ENCODE measurements at regions of chr12 and their contacts with region 1.

Region 1: GRCh38 chr12:80269803-80270552 is 170.6 kb downstream of the OTOGL start:
- DNase-seq: peak in 1 of 5 donors; percentile 12
- ATAC-seq: peak in 2 of 4 donors; percentile 50 to 51
- H3K4me3 ChIP-seq: no peak overlapping the region
- H3K27ac ChIP-seq: no peak overlapping the region
- H3K4me1 ChIP-seq: peaks cover 0 to 8% (median 0%) of the 10 kb centered on the region in 12 donors
- H3K27me3 ChIP-seq: no peaks in the 10 kb centered on the region
- CTCF ChIP-seq: peak; percentile 51 to 83 (median 66)
- POLR2A ChIP-seq: no peak

Region 2: DNA sequence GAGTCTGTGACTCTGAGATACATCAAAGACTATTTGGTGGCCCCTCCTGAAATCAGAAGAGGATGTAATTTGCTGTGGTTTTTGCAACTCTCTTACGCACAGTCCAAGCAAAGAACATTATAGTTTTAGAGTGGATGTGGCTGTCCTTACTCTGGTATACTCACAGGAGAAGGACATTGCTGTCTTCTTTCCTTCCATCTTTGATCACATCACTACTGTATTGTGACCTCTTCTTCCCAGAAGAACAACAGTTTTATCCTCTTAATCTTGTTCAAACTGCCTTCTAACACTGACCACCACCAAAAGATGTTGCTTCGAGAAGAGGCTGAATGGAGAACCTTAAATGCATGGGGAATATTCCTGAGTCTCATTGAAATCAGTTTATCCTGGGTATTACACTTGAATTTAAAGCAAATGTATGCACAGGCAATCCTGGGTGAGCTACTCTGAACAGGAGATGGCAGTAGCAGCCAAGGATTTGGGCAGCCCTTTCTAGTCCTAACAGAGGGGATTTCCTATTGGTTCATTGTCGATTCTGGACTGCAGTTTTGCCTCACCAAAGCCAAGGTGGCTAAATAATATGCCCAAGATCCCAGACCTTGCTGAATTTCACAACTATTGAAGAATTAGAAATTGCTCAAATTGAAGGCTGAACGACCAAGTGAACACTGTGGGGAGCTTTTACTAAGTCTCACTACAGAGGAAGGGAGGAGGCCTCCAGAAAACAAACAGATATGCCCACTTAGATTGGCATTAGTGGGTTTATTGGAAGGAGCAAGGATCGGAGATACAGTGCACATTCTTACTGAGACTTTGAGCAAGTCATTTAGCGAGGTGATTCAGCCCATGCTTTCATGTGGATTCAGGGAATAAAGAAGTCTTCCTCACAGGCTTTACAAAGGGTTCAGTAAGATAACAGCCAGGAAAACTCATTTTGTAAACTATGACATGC is 862.0 kb before region 1 on chr12:
- intact Hi-C with region 1: loop called in 4 of 10 experiments (anchors 5 to 10 kb)
- DNase-seq: peak in 4 of 5 donors; percentile 21 to 33 (median 28)
- ATAC-seq: peak; percentile 48 to 74 (median 67)
- H3K4me3 ChIP-seq: no peak overlapping the region
- H3K27ac ChIP-seq: no peak overlapping the region
- H3K4me1 ChIP-seq: no peaks in the 10 kb centered on the region
- H3K27me3 ChIP-seq: no peaks in the 10 kb centered on the region
- CTCF ChIP-seq: peak; percentile 27 to 71 (median 50)
- POLR2A ChIP-seq: no peak

Region 3: GRCh38 chr12:79547735-79548609 is 722.0 kb before region 1 on chr12:
- intact Hi-C with region 1: loop called in 1 of 10 experiments (anchors 5 kb)
- DNase-seq: peak in 1 of 5 donors; percentile 34
- ATAC-seq: peak in 3 of 4 donors; percentile 59 to 75 (median 73)
- H3K4me3 ChIP-seq: no peak overlapping the region
- H3K27ac ChIP-seq: peak overlapping the region in 4 of 12 donors; percentile 2 to 8 (median 6)
- H3K4me1 ChIP-seq: peaks cover 0 to 22% (median 6%) of the 10 kb centered on the region in 12 donors
- H3K27me3 ChIP-seq: no peaks in the 10 kb centered on the region
- CTCF ChIP-seq: peak; percentile 52 to 81 (median 65)
- POLR2A ChIP-seq: no peak

Region 4: GRCh38 chr12:79737875-79738718 is 531.9 kb before region 1 on chr12:
- intact Hi-C with region 1: loop called in 1 of 10 experiments (anchors 5 kb)
- DNase-seq: no peak
- ATAC-seq: no peak
- H3K4me3 ChIP-seq: no peak overlapping the region
- H3K27ac ChIP-seq: no peak overlapping the region
- H3K4me1 ChIP-seq: peaks cover 0 to 3% (median 0%) of the 10 kb centered on the region in 12 donors
- H3K27me3 ChIP-seq: no peaks in the 10 kb centered on the region
- CTCF ChIP-seq: peak; percentile 46 to 73 (median 64)
- POLR2A ChIP-seq: no peak

Region 5: GRCh38 chr12:80195074-80195726 is 74.8 kb before region 1 on chr12:
- intact Hi-C with region 1: loop called (anchors 1 to 5 kb)
- DNase-seq: peak in 1 of 5 donors; percentile 24
- ATAC-seq: peak in 2 of 4 donors; percentile 52 to 67
- H3K4me3 ChIP-seq: no peak overlapping the region
- H3K27ac ChIP-seq: peak overlapping the region in 1 of 12 donors; percentile 5
- H3K4me1 ChIP-seq: peaks cover 0 to 5% (median 0%) of the 10 kb centered on the region in 12 donors
- H3K27me3 ChIP-seq: no peaks in the 10 kb centered on the region
- CTCF ChIP-seq: peak; percentile 31 to 71 (median 51)
- POLR2A ChIP-seq: no peak

Region 6: DNA sequence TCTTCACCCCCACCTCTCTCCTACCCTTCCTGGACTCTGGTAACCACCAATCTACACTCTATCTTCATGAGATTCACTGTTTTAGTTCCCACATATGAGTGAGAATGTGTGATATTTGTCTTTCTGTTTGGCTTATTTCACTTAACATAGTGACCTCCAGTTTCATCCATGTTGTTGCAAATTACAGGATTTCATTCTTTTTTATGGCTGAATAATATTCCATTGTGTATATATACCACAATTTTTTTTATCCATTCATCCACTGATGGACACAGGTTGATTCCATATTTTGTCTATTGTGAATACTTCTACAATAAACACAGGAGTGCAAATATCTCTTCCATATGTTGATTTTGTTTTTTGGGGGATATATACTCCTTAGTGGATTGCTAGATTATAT is 30.1 kb before region 1 on chr12:
- intact Hi-C with region 1: no loop called
- DNase-seq: no peak
- ATAC-seq: no peak
- H3K4me3 ChIP-seq: no peak overlapping the region
- H3K27ac ChIP-seq: no peak overlapping the region
- H3K4me1 ChIP-seq: peaks cover 0 to 6% (median 0%) of the 10 kb centered on the region in 12 donors
- H3K27me3 ChIP-seq: no peaks in the 10 kb centered on the region
- CTCF ChIP-seq: no peak
- POLR2A ChIP-seq: no peak

Region 7: GRCh38 chr12:80472902-80473500 is 203.0 kb after region 1 on chr12:
- intact Hi-C with region 1: no loop called
- DNase-seq: no peak
- ATAC-seq: peak in 1 of 4 donors; percentile 67
- H3K4me3 ChIP-seq: no peak overlapping the region
- H3K27ac ChIP-seq: no peak overlapping the region
- H3K4me1 ChIP-seq: no peaks in the 10 kb centered on the region
- H3K27me3 ChIP-seq: no peaks in the 10 kb centered on the region
- CTCF ChIP-seq: peak in 8 of 12 donors; percentile 26 to 51 (median 32)
- POLR2A ChIP-seq: no peak

Measured in heart left ventricle (tissue), 16 donors.